ENCODE measurements at regions of chrX and their contacts with region 1.

Region 1: GRCh38 chrX:68822641-68823410 is 6.0 kb upstream of the EFNB1 start:
- DNase-seq: peak; percentile 70
- H3K4me3 ChIP-seq: no peak overlapping the region
- H3K27ac ChIP-seq: no peak overlapping the region
- H3K4me1 ChIP-seq: peaks cover 3 to 9% (median 6%) of the 10 kb centered on the region in 4 donors
- H3K27me3 ChIP-seq: peaks cover 0 to 5% (median 0%) of the 10 kb centered on the region in 4 donors
- CTCF ChIP-seq: peak; percentile 48 to 72 (median 61)
- EP300 ChIP-seq: no peak
- POLR2A ChIP-seq: no peak

Region 2: GRCh38 chrX:68147848-68148247 is 675.0 kb before region 1 on chrX:
- intact Hi-C with region 1: no loop called
- DNase-seq: no peak
- H3K4me3 ChIP-seq: no peak overlapping the region
- H3K27ac ChIP-seq: no peak overlapping the region
- H3K4me1 ChIP-seq: no peaks in the 10 kb centered on the region
- H3K27me3 ChIP-seq: no peaks in the 10 kb centered on the region
- CTCF ChIP-seq: no peak
- EP300 ChIP-seq: no peak
- POLR2A ChIP-seq: no peak

Region 3: GRCh38 chrX:69387567-69388487 is 565.0 kb after region 1 on chrX:
- intact Hi-C with region 1: loop called (anchors 5 kb)
- DNase-seq: no peak
- H3K4me3 ChIP-seq: no peak overlapping the region
- H3K27ac ChIP-seq: no peak overlapping the region
- H3K4me1 ChIP-seq: peaks cover 0 to 3% (median 0%) of the 10 kb centered on the region in 4 donors
- H3K27me3 ChIP-seq: no peaks in the 10 kb centered on the region
- CTCF ChIP-seq: peak; percentile 51 to 72 (median 67)
- EP300 ChIP-seq: no peak
- POLR2A ChIP-seq: no peak

Measured in esophagus muscularis mucosa (tissue), 4 donors.